Dorsolateral prefrontal cortex (tissue), 120 donors: ENCODE measurements at regions of chr5 and their contacts with region 1.

Region 1: GRCh38 chr5:171913987-171914273 is 92.5 kb downstream of the FBXW11 start:
- DNase-seq: no peak
- H3K4me3 ChIP-seq: no peak overlapping the region
- H3K27ac ChIP-seq: no peak overlapping the region
- H3K27me3 ChIP-seq: no peaks in the 10 kb centered on the region
- CTCF ChIP-seq: no peak

Region 2: DNA sequence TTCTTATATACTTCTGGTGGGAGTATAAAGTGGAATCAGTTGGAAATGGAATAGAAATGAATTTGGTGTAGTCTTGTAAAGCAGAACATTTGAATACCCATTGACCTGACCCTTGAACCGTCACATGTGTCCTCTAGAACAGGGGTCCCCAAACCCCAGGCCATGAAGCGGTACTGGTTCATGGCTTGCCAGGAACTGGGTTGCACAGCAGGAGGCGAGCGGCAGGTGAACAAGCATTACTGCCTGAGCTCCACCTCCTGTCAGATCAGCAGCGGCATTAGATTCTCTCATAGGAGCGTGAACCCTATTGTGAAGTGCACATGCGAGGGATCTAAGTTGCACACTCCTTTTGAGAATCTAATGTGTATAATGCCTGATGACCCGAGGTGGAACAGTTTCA is 972.1 kb before region 1 on chr5:
- intact Hi-C with region 1: no loop called
- DNase-seq: no peak
- H3K4me3 ChIP-seq: no peak overlapping the region
- H3K27ac ChIP-seq: no peak overlapping the region
- H3K27me3 ChIP-seq: no peaks in the 10 kb centered on the region
- CTCF ChIP-seq: no peak

Region 3: DNA sequence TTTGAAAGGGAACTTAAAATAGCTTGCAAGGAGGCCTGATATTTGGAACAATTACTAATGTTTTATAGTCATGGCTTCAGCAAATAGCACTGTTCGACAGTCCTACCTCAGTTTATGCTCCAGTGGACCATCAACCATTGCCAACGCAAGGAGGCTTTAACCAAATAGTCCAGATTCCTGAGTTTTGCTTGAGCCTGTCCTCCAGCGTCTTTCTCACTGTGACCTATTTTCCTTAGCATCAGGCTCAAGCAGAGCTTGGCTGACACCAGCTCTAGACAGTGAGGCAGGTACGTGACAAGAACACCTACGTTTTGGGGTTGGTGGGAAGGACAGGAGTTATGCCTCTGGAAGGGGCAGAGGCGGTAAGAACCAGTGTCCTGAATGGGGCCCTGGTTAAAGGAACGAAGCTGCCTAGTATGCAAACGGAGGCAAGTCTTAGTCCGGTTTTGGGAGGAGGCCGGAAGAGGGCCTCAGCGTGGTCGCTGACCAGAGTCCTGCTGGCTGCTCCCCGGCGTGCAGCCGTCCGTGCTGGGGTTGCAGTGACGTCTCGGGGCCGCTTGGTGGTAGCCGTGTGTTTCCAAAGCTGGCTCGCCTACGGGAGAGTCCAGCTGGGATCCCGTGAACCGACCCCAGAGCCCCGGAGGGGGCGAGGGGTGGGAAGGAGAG is 495.5 kb before region 1 on chr5:
- intact Hi-C with region 1: loop called in 1 of 2 experiments (anchors 5 kb)
- DNase-seq: peak; percentile 54 to 84 (median 74)
- H3K4me3 ChIP-seq: peak overlapping the region; percentile 16 to 75 (median 51)
- H3K27ac ChIP-seq: no peak overlapping the region
- H3K27me3 ChIP-seq: peaks cover 0 to 16% (median 0%) of the 10 kb centered on the region in 45 donors
- CTCF ChIP-seq: peak; percentile 57 to 96 (median 86)

Region 4: DNA sequence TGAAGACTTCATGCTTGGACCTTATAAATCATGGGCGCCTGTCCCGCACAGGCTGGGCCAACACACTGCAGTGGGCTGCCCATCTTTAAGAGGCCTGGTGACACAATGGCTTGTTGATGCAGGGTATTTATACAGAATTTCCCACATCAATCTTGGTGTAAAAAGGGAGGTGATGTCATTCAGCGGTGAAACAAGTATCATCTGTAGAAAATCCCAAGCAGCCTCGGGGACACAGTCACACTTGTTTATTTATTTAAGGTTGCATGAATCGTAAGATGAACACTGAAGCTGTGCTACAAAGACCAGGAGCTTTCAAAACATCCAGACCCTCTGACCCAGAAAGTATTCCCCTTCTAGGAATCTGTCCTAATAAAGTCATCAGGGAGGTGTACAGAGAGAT is 87.8 kb before region 1 on chr5:
- intact Hi-C with region 1: no loop called
- DNase-seq: no peak
- H3K4me3 ChIP-seq: no peak overlapping the region
- H3K27ac ChIP-seq: no peak overlapping the region
- H3K27me3 ChIP-seq: no peaks in the 10 kb centered on the region
- CTCF ChIP-seq: no peak

Region 5: DNA sequence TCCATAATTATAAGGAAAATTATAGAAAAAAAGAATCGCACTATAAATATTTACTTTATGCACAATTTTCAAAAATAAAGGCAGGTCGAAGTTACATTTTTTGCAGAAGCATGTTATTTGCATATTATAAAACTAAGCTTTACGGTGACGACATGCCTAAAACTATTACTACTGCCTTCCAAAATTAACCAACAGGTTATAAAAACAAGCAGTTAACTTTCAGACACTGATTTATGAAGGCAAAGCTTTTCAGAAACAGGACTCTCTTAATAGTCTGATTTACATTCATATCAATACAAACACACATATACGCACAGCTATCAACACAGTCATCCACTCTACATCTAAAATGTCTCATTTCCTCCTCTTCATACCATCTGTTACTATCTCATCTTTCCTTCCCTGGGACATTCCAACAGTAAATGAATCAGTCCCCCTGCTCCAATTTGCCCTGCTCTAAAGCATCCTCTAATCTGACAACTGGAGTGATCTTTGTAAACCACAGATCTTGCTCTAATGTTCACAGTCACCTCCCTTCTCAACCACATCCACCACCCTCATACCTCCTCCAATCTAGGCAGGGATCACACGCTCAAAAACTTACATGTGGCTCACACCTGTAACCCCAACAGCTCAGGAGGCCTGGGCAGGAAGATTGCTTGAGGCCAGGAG is 71.0 kb after region 1 on chr5:
- intact Hi-C with region 1: no loop called
- DNase-seq: no peak
- H3K4me3 ChIP-seq: no peak overlapping the region
- H3K27ac ChIP-seq: no peak overlapping the region
- H3K27me3 ChIP-seq: no peaks in the 10 kb centered on the region
- CTCF ChIP-seq: no peak

Region 6: DNA sequence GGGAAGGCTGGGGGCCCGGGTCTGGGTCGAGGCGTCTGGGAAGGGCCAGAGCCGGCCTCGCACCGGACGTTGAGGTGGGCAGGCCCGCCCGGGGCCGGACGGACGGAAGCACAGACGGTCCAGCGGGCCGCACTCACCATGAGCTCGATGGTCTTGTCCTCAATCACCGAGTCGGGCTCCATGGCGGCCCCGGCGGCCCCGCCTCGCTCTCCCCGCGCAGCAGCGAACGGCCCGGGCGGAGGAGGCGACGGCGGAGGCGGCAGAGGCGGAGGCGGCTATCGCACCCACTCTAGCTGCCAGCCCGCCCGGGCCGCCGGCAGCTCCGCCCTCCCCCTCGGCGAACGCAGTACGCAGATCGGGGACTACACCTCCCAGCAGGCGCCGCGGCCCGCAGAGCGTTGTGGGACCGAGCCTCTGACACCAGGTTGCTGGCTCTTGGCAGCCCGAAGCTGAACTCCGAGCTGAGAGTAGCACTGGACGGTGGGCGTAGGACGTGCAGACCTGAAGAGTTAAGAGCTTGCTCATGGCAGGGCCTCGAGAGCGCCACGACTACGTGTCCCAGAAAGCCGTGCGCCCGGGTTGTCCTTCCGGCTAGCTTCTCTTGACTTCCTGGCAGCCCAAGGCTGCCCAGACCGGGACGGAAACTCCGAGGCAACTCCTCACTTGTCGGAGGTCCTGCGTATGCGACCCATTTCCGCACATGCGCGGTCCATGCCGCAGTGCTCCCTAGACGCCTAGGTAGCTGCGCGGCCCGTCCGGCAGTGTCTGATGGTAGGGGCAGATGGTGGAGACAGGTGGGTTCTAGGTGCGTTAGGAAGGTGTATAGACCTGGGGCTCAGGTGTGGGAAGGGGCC is 92.6 kb after region 1 on chr5 and contains the start of gene FBXW11:
- intact Hi-C with region 1: loop called (anchors 2 to 5 kb)
- DNase-seq: peak; percentile 95 to 98 (median 98)
- H3K4me3 ChIP-seq: peak within 1 kb of the TSS; percentile 72 to 100 (median 96)
- H3K27ac ChIP-seq: peak within 1 kb of the TSS; percentile 89 to 100 (median 98)
- H3K27me3 ChIP-seq: no peaks in the 10 kb centered on the region
- CTCF ChIP-seq: peak in 21 of 56 donors; percentile 5 to 53 (median 25)
- total RNA-seq, gene FBXW11: 88.4 to 136 (median 113) TPM

Region 7: DNA sequence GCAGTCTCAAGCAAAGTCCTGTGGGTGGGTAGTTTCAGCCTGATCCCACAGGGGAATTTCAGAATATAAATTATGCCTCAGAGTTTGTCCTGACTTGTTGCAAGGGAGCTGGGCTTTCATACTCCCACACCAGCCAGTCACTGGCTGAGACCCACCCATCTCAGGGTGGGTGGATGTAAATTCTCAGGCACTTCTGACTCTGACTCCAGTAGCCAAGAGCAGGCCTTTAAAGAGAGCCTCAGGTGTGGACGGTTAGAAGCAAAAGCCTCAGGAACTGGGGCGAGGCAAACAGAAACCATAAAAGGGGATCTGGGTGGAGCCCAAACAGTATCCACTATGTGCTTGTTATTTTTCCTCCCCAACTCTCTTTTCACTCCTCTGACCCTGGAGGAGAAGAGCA is 121.1 kb after region 1 on chr5:
- intact Hi-C with region 1: loop called (anchors 2 to 10 kb)
- DNase-seq: no peak
- H3K4me3 ChIP-seq: no peak overlapping the region
- H3K27ac ChIP-seq: no peak overlapping the region
- H3K27me3 ChIP-seq: no peaks in the 10 kb centered on the region
- CTCF ChIP-seq: no peak

Region 8: DNA sequence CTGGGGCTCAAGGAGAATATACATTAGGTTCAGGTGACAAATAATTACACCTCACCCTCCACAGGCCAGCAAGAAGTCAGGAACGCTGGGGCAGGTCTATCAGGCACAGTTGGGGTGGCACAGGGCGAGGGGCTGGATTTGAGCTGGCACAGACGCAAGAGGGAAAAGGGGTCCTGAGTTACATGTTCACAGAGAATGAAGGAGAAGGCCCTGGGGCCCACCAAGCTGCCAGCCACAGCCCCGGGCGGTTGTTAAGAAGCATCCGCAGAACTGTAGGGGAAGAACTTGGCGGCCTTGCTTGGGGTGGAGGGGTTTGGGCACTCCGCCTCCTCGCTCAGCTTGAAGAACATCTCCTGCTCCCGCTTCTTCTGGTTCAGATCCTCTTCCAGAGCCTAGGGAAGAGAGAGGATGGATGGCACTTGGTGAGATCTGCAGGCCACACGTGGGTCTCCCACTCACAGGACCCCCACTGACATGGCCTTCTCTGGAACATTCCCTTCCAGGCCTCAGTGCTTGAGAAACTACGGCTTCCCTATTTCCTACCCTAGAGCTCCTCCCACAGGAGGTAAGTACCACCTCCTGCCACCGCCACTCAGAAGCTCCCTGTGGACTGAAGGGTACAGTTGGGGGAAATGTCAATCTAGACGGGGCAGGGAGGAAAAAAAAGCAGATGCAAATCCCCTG is 130.8 kb after region 1 on chr5:
- intact Hi-C with region 1: loop called (anchors 2 to 10 kb)
- DNase-seq: no peak
- H3K4me3 ChIP-seq: no peak overlapping the region
- H3K27ac ChIP-seq: peak overlapping the region in 1 of 59 donors; percentile 88
- H3K27me3 ChIP-seq: no peaks in the 10 kb centered on the region
- CTCF ChIP-seq: no peak

Region 9: GRCh38 chr5:172188033-172188892 is 274.3 kb after region 1 on chr5 and contains the start of gene STK10:
- intact Hi-C with region 1: loop called in 1 of 2 experiments (anchors 5 kb)
- DNase-seq: peak; percentile 78 to 94 (median 86)
- H3K4me3 ChIP-seq: peak within 1 kb of the TSS; percentile 68 to 98 (median 91)
- H3K27ac ChIP-seq: peak within 1 kb of the TSS; percentile 29 to 94 (median 85)
- H3K27me3 ChIP-seq: no peaks in the 10 kb centered on the region
- CTCF ChIP-seq: peak; percentile 44 to 97 (median 89)
- total RNA-seq, gene STK10: 4.5 to 28.7 (median 16.7) TPM

Region 10: DNA sequence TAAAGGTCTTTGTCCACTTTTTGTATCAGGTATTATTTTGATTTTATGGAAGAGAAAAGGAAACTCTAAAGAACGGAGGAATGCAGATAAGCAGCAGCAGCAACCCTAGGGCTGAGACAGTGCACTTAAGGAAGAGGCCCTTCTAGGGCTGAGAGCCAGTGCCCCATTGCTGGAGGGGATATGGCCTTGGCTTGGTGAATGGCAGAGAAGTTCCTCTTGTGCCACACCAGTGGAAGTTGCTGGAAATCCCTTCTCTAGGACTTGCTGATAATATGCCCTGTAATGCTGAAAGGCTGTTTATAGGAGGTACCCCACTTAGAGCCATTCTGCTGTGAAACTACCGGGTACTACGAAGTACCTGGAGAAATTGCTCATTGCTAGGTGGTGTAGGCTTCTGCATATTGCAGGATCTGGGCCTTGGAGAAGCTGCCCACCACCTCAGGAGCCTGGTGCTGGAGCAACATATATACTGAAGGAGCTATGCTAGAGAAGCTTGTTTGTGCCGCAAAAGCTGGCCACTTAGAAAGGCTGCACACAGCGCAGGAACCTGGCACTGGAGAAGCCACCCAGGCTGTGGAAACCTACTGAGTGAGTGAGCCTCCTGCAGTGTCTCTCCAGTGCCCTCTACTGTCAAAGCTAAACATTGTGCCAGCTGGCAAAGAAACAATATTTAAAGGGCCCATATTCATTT is 379.3 kb after region 1 on chr5:
- intact Hi-C with region 1: loop called in 1 of 2 experiments (anchors 10 kb)
- DNase-seq: peak; percentile 37 to 85 (median 76)
- H3K4me3 ChIP-seq: peak overlapping the region in 4 of 59 donors; percentile 0 to 15 (median 8)
- H3K27ac ChIP-seq: peak overlapping the region in 31 of 59 donors; percentile 2 to 90 (median 61)
- H3K27me3 ChIP-seq: no peaks in the 10 kb centered on the region
- CTCF ChIP-seq: peak; percentile 60 to 90 (median 80)